Body of pancreas (tissue), 4 donors: ENCODE measurements at regions of chr2 and their contacts with region 1.

Region 1: DNA sequence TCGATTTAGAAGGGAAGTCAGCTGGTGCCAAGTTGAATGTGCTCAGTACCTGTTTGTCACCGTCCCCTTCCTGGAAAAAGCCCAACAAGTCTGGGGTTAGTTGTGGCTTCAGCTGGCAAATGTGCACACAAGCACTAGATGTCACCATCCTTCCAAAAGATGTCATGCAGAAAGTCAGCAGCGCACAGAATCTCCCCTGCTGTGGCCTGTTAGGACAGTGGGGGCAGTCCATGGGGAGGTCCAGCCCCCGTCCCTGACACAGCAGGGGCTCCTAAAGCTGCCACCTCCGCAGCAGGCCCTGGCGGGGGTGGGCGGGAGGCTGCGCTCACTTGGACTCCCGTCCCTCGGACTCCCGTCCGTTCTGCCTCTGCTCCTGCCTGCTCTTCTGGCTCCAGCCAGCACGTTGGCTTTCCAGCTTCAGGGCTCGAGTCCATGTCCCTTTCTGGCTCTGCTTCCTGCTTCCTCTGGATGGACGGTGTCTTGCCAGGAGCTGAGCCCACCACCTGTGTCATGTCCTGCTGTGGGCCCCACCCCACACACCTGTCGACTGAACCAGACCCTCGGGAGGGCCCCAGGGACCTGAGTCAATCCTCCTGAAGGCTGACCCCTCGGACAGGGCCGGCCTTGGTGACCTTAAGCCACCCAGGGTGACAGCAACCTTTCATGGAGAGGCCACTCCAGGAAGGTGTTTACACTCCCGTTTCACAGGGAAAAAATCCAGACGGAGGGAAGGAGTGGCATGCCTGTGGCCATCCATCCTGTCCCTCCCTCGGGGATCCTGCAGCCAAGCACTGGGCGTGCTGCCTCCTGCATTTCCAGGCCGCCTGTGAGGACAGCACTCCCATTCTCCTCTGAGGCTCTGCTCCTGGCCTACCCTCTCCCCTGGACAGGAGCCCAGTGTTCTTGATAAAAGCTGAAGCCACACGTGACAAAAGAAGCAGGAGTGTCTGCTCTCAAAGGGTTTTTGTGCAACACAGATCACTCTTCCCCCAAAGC is 8.5 kb downstream of the RAB17 start:
- DNase-seq: peak; percentile 49 to 80 (median 75)
- ATAC-seq: peak; percentile 81
- H3K4me3 ChIP-seq: no peak overlapping the region
- H3K27ac ChIP-seq: peak overlapping the region; percentile 63 to 80 (median 74)
- H3K4me1 ChIP-seq: peaks cover 29% of the 10 kb centered on the region
- H3K27me3 ChIP-seq: no peaks in the 10 kb centered on the region
- CTCF ChIP-seq: peak in 5 of 7 experiments; percentile 19 to 39 (median 34)
- POLR2A ChIP-seq: peak in 2 of 3 donors; percentile 10 to 37

Region 2: DNA sequence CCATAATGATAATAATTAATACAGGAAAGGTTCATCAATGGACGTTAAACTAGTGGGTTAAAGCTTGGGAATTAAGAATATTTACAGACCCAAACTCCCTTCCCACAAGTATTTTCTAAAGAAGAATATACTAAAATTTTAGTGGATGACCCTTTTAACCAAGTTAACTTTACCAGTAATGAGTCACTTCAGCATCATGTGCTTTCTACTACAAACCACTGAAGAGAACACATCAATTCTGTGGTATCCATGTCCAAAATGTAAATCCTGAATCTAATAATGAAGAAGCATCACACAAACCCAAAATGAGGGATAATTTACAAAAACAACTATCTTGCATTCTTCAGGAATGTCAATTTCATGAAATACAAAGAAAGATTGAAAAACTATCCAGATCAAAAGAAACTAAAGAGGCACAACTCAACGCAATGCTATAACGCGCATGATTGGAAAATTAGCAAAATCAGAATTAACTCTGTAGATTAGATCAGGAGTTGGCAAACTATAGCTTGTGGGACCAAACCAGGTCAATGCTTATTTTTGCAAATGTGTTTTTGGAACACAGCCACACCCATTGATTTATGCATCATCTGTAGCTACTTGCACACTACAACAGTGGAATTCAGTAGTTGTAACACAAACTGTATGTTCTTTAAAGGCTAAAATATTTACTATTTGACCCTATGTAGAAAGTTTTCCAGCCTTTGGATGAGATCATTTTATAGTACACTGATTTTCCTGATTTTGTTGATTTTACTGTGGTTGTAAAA is 468.8 kb before region 1 on chr2:
- intact Hi-C with region 1: no loop called
- DNase-seq: no peak
- ATAC-seq: no peak
- H3K4me3 ChIP-seq: no peak overlapping the region
- H3K27ac ChIP-seq: no peak overlapping the region
- H3K4me1 ChIP-seq: no peaks in the 10 kb centered on the region
- H3K27me3 ChIP-seq: no peaks in the 10 kb centered on the region
- CTCF ChIP-seq: no peak
- POLR2A ChIP-seq: no peak

Region 3: DNA sequence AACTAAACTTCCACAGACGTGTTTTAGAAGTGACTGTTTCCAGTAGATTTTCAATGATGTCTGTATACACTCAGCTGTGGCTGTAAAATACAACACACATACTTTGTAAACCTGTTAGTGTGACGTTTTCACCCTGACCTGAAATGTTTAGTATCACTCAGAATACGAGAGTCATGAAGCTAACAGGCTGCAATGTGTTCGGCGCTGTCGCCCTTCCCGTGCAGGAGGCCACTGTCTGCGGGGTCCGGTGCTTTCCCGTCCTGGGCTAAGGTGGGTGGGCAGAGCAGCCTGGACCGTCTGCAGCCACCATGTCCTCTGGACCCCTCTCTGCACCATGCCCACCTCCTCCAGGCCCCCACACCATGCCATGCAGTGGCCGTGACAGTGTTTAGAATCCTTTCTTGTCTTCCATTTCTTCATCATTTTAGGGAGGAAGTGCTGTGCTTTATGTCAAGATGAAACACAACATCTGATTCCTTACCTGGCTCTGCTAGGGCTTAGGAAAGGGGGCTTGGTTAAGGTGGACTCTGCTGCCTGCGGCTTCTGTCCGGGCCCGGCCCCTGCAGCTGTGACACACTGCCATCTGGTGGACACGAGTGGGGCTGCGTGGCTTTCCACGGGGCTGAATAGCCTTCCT is 162.7 kb after region 1 on chr2:
- intact Hi-C with region 1: loop called (anchors 10 kb)
- DNase-seq: peak; percentile 69 to 83 (median 78)
- ATAC-seq: peak; percentile 83
- H3K4me3 ChIP-seq: no peak overlapping the region
- H3K27ac ChIP-seq: no peak overlapping the region
- H3K4me1 ChIP-seq: peaks cover 22% of the 10 kb centered on the region
- H3K27me3 ChIP-seq: no peaks in the 10 kb centered on the region
- CTCF ChIP-seq: peak; percentile 89 to 97 (median 94)
- POLR2A ChIP-seq: no peak